ENCODE measurements at regions of chr7 and their contacts with region 1.

Region 1: GRCh38 chr7:139023076-139023475 is 12.8 kb downstream of the ZC3HAV1L start:
- DNase-seq: no peak
- ATAC-seq: no peak
- H3K4me3 ChIP-seq: no peak overlapping the region
- H3K4me3 Mint-ChIP-seq: no peak overlapping the region
- H3K27ac ChIP-seq: no peak overlapping the region
- H3K27ac Mint-ChIP-seq: no peak overlapping the region
- H3K4me1 ChIP-seq: no peaks in the 10 kb centered on the region
- H3K4me1 Mint-ChIP-seq: peaks cover 2% of the 10 kb centered on the region
- H3K27me3 ChIP-seq: no peaks in the 10 kb centered on the region
- H3K27me3 Mint-ChIP-seq: no peaks in the 10 kb centered on the region
- CTCF ChIP-seq: no peak

Region 2: GRCh38 chr7:138935465-138936011 is 87.5 kb before region 1 on chr7:
- CTCF ChIA-PET with region 1: no interaction called
- POLR2A ChIA-PET with region 1: no interaction called
- intact Hi-C with region 1: no loop called
- DNase-seq: no peak
- ATAC-seq: no peak
- H3K4me3 ChIP-seq: no peak overlapping the region
- H3K4me3 Mint-ChIP-seq: no peak overlapping the region
- H3K27ac ChIP-seq: no peak overlapping the region
- H3K27ac Mint-ChIP-seq: no peak overlapping the region
- H3K4me1 ChIP-seq: no peaks in the 10 kb centered on the region
- H3K4me1 Mint-ChIP-seq: no peaks in the 10 kb centered on the region
- H3K27me3 ChIP-seq: no peaks in the 10 kb centered on the region
- H3K27me3 Mint-ChIP-seq: peaks cover 5% of the 10 kb centered on the region
- CTCF ChIP-seq: no peak

Region 3: GRCh38 chr7:139058943-139059342 is 35.9 kb after region 1 on chr7:
- CTCF ChIA-PET with region 1: interaction called, 11 read pairs
- POLR2A ChIA-PET with region 1: no interaction called
- intact Hi-C with region 1: loop called in 1 of 2 experiments (anchors 5 kb)
- DNase-seq: no peak
- ATAC-seq: no peak
- H3K4me3 ChIP-seq: no peak overlapping the region
- H3K4me3 Mint-ChIP-seq: no peak overlapping the region
- H3K27ac ChIP-seq: peak overlapping the region in 1 of 2 experiments; percentile 12
- H3K27ac Mint-ChIP-seq: peak overlapping the region; percentile 81
- H3K4me1 ChIP-seq: peaks cover 21% of the 10 kb centered on the region
- H3K4me1 Mint-ChIP-seq: peaks cover 55% of the 10 kb centered on the region
- H3K27me3 ChIP-seq: no peaks in the 10 kb centered on the region
- H3K27me3 Mint-ChIP-seq: no peaks in the 10 kb centered on the region
- CTCF ChIP-seq: no peak

Region 4: GRCh38 chr7:139359366-139360209 is 336.5 kb after region 1 on chr7 and contains the start of gene LUC7L2:
- CTCF ChIA-PET with region 1: no interaction called
- POLR2A ChIA-PET with region 1: no interaction called
- intact Hi-C with region 1: no loop called
- DNase-seq: peak; percentile 99 to 100 (median 99)
- ATAC-seq: peak; percentile 74
- H3K4me3 ChIP-seq: peak within 1 kb of the TSS; percentile 86 to 97
- H3K4me3 Mint-ChIP-seq: peak within 1 kb of the TSS; percentile 99
- H3K27ac ChIP-seq: peak within 1 kb of the TSS; percentile 93 to 99
- H3K27ac Mint-ChIP-seq: peak within 1 kb of the TSS; percentile 100
- H3K4me1 ChIP-seq: peaks cover 35% of the 10 kb centered on the region
- H3K4me1 Mint-ChIP-seq: peaks cover 41% of the 10 kb centered on the region
- H3K27me3 ChIP-seq: no peaks in the 10 kb centered on the region
- H3K27me3 Mint-ChIP-seq: no peaks in the 10 kb centered on the region
- CTCF ChIP-seq: no peak
- total RNA-seq, gene LUC7L2: 171 to 192 TPM

Measured in CD8-positive, alpha-beta T cell (primary cell).